Mammary epithelial cell (primary cell): ENCODE measurements at regions of chr13 and their contacts with region 1.

Region 1: DNA sequence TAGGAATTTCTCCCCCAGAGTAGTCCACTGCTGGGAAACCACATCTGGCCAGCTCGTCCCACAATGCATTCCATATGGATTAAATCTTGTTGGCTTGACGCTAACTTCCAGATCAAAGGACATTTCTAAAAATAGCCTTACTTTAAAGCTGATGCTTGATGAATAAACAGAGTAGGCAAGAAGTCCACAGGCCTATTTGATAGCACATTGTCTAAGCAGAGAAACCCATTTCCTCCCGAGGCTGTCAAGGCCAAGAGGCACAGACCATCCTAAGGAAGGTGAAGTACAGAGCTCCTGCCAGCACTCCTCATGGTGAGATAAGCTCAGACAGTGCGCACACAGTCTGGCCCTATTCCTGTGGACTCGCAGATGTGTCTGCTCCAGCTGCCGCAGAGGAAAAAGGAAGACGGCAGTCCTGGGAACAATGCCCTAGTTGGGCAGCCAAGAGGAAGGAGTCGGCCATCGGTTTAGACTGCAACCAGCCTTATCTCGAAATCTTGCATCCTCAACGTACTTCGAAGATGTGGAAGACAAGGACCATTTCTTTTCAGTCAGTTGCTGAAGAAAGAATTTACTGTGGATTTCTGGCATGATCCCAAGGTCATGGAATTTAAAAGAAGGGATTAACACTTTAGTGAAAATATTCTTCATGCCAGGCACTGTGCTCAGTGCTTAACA is 156.8 kb downstream of the RGCC start:
- DNase-seq: peak; percentile 51
- H3K4me3 ChIP-seq: no peak overlapping the region
- H3K27ac ChIP-seq: peak overlapping the region; percentile 40
- H3K4me1 ChIP-seq: peaks cover 46% of the 10 kb centered on the region
- H3K27me3 ChIP-seq: no peaks in the 10 kb centered on the region
- CTCF ChIP-seq: no peak

Region 2: GRCh38 chr13:41562083-41562482 is 52.0 kb before region 1 on chr13:
- CTCF ChIA-PET with region 1: no interaction called
- dilution Hi-C with region 1: no loop called
- in situ Hi-C with region 1: no loop called
- intact Hi-C with region 1: no loop called
- DNase-seq: peak; percentile 71
- H3K4me3 ChIP-seq: no peak overlapping the region
- H3K27ac ChIP-seq: no peak overlapping the region
- H3K4me1 ChIP-seq: peaks cover 26% of the 10 kb centered on the region
- H3K27me3 ChIP-seq: no peaks in the 10 kb centered on the region
- CTCF ChIP-seq: no peak

Region 3: DNA sequence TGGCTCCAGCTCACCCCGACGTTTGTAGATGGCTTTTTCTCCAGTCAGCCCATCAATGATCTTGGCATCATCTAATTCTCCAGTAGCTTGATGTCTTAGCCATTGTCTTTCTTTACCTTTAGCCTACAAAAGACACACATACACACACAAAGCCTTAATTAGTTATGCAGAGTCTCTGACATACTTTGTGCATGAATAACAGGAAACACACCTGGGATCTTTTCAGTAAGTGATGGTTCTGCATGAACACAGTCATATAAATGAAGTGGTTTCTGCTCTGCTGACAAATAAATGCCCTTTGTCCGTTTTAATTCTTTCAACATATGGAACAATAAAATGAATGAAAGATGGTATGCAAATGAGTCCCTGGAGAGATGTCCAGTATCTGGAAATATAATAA is 23.5 kb before region 1 on chr13:
- CTCF ChIA-PET with region 1: no interaction called
- dilution Hi-C with region 1: no loop called
- in situ Hi-C with region 1: no loop called
- intact Hi-C with region 1: loop called (anchors 1 kb)
- DNase-seq: peak; percentile 84
- H3K4me3 ChIP-seq: no peak overlapping the region
- H3K27ac ChIP-seq: peak overlapping the region; percentile 87
- H3K4me1 ChIP-seq: peaks cover 24% of the 10 kb centered on the region
- H3K27me3 ChIP-seq: no peaks in the 10 kb centered on the region
- CTCF ChIP-seq: no peak

Region 4: DNA sequence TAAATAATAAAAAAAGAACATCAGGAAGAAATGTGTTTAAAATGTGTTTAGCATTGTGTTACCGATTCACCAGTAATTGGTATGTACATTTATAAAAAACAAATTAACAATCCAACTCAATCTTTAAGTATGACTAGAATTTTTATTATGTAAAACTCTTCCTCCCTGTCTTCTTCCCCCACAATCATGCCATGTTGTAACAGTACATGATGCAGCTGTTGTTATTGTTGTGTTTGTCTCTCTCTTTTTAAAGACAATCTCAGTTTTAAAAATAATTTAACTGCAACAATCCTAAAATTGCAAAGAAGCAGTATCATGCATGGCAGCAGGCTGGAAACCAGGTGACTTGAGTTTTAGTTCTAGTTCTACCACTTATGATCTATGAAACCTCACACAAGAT is 23.5 kb after region 1 on chr13:
- CTCF ChIA-PET with region 1: no interaction called
- dilution Hi-C with region 1: no loop called
- in situ Hi-C with region 1: no loop called
- intact Hi-C with region 1: no loop called
- DNase-seq: no peak
- H3K4me3 ChIP-seq: no peak overlapping the region
- H3K27ac ChIP-seq: no peak overlapping the region
- H3K4me1 ChIP-seq: no peaks in the 10 kb centered on the region
- H3K27me3 ChIP-seq: no peaks in the 10 kb centered on the region
- CTCF ChIP-seq: no peak

Region 5: DNA sequence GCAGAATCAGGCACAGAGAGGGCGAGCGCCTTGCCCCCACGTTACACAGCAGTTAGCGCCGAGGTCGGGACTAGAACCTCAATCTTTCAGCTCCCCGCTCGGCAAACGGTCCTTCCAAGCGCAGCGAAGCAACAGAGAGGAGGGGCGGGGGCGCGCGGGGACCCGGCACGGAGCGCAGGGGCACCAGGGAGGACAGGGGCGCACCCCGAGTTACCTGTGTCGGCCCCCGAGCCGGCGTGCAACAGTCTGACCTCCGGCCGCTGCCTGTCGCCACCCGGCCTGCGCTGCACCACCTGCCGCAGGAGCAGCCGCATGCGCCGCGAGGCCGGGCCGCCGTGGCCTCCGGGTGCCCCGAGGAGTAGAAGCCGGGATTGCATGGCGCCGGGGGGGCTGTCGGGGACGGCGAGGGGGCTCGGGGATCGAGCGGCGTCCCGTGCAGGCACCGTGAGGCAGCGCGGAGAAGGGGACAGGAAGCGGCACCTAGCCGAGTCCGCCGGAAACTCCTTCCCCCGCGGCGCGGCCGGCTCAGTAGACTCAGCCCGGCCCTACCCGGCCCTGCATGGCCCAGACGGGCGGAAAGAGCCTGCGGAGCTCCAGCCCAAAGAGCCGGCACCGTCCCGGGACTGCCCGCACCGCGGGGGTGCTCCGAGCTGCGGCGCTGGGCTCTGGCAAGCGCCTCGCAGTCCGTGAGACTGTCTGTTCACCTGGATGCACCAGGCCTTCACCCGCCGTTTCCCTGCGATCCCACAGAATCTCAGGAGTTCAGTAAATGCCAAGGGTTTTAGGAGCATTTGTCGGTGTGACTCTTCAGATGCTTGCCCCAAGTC is 346.7 kb after region 1 on chr13 and contains the start of gene VWA8:
- CTCF ChIA-PET with region 1: no interaction called
- dilution Hi-C with region 1: no loop called
- in situ Hi-C with region 1: no loop called
- intact Hi-C with region 1: no loop called
- DNase-seq: peak; percentile 84
- H3K4me3 ChIP-seq: peak within 1 kb of the TSS; percentile 82 to 88 (median 84)
- H3K27ac ChIP-seq: peak within 1 kb of the TSS; percentile 82
- H3K4me1 ChIP-seq: peaks cover 27% of the 10 kb centered on the region
- H3K27me3 ChIP-seq: no peaks in the 10 kb centered on the region
- CTCF ChIP-seq: no peak
- total RNA-seq, gene VWA8: 24.1 to 32.0 TPM